ENCODE measurements at regions of chr1 and their contacts with region 1.

Region 1: DNA sequence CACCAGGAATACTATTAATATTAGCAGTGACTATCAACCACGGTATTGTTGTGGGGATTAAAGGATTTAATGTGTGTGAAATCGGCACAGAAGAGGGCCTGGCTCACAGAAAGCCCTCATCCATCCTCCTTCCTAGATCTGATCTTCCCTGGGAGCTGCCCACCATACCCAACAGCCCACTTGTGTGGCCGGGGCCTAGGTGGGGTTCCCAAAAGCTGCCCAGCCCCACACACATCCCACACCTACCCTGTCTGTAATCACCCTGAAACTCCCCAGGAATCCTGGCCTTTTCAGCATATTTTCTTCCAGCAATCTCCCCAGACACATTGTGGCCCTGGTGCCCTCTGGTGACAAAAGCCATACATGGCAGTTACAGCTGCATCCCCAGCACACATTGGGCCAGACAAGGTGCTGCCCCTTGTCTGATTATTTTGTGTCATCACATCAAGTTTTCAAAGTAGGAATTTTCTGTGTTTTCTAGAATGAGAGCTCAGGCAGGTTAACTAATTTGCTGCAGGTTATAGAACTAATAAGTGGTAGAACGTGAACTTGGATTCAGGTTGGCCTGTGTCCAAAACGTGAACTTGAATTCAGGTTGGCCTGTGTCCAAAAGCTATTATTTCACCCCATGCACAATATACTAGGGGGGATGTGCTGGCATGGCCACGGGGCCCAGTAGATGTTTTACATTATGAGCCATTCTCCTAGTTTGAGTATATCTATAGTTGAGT is 5.3 kb upstream of the SLC6A9 start:
- DNase-seq: peak; percentile 48 to 67
- ATAC-seq: peak; percentile 85 to 89
- H3K4me3 ChIP-seq: no peak overlapping the region
- H3K27ac ChIP-seq: peak overlapping the region; percentile 63 to 77
- H3K4me1 ChIP-seq: peaks cover 30% of the 10 kb centered on the region
- CTCF ChIP-seq: peak; percentile 72
- EP300 ChIP-seq: no peak
- POLR2A ChIP-seq: no peak
- RAD21 ChIP-seq: peak; percentile 77 to 79

Region 2: DNA sequence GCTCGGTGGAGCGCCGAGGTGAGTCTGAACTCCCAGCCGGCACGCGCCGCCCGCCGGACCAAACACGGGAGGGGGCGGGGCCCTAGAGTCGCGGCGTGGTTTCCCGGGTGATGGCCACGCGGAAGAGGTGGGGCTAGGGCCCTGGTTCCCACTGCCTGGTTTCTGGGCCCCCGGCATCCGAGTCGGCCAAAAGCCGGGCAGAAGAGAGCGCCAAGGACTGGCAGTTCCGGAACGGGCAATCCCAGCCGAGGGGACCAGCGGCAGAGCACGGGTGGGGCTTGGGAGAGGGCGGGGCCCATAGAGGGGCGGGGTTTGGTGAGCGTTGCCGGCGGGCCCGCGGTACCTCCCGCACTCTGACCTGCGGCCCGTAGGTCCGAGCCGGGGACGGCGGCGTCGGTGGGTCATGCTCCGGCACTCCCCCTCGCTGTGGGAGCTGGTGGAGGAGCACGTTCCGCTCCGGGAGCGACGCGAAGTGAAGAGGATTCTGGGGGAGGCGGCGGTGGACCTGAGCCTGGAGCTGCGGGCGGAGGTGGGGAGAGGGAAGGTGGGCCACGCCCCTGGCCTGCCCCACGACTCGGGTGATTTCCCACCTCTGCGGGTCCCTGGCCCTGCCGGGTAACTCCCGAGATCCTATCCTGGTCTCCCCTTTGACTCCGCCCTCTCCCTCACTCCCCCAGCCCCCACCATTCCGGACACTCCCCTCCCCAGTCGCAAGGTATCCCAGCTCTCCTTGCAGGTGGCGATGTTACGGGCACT is 44.9 kb before region 1 on chr1 and contains the start of gene CCDC24:
- CTCF ChIA-PET with region 1: interaction called, 412 read pairs
- POLR2A ChIA-PET with region 1: no interaction called
- DNase-seq: peak; percentile 65 to 83
- ATAC-seq: peak; percentile 73 to 87
- H3K4me3 ChIP-seq: peak within 1 kb of the TSS; percentile 84
- H3K27ac ChIP-seq: peak within 1 kb of the TSS; percentile 87 to 89
- H3K4me1 ChIP-seq: peaks cover 27% of the 10 kb centered on the region
- CTCF ChIP-seq: no peak
- EP300 ChIP-seq: no peak
- POLR2A ChIP-seq: peak; percentile 43
- RAD21 ChIP-seq: no peak
- polyA plus RNA-seq, gene CCDC24: 2.0 and 2.9 TPM in 2 replicates

Region 3: DNA sequence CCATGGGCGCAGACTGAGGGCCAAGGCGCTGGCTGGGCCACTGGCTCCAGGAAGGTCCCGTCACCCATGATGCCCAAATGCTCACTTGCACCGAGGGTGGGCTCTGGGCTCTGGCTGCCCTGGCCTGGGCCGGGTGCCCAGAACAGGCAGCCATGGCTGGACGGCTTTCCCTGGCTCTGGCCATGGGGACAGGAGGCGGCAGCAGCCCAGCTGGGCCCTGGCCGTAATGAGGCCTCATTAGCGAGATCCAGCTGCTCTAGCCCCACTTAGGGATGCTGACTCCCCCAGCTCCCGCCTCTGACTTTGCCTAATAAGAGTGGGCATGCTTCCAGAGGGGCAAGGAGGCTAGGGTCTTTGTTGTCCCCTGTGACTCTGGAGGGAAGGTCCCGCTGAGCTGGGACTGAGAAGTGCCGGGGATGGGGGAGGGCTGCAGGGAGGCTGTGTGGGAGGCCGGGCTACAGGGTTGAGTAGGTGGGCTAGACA is 17.1 kb before region 1 on chr1:
- CTCF ChIA-PET with region 1: interaction called, 49 read pairs
- POLR2A ChIA-PET with region 1: no interaction called
- DNase-seq: no peak
- ATAC-seq: no peak
- H3K4me3 ChIP-seq: no peak overlapping the region
- H3K27ac ChIP-seq: no peak overlapping the region
- H3K4me1 ChIP-seq: peaks cover 5% of the 10 kb centered on the region
- CTCF ChIP-seq: no peak
- EP300 ChIP-seq: no peak
- POLR2A ChIP-seq: no peak
- RAD21 ChIP-seq: no peak